ENCODE measurements at regions of chr17 and their contacts with region 1.

Region 1: DNA sequence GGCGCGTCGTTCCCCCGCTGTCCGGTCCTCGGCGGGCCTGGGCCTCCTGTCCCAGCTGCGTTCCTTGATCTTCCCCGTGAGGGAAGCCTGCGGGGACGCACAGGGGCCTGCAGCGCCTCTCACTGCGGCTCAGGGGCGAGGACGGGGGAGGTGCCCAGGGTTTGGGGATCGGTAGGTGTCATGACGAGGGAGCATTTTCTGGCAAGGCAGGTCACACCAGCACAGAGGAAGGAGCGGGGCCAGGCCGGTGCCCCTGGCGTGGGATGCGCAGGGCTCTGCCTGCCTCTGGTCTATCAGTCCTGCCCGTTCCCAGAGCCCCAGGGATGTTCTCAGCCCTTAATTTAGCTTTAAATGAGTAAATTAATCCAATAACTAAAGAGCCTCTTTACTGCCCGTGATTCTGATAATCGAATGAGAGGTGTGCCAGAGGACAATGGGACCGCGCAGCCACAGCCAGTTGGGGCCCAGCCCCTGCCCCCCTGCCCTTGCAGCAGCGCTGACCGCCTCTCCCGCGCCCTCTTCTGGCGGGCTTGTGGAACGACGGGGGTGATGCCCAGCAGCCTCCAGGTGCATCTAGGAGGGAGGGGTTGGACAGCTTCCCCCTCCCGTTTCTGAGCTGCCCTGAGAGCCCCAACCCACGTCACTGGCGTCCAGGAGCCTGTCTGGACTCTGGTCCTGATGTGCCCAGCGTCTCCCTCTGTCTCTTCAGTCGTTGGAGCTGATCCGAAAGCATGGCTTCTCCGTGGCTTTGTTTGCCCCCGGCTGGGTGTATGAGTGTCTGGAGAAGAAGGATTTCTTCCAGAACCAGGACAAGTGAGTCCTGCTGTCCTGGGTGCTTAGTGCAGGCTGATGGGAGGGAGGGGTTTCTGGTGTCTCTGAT is 7.9 kb downstream of the ENGASE start:
- DNase-seq: peak; percentile 57 to 89
- ATAC-seq: peak; percentile 44 to 83; a peak in 3 of 6 replicates
- H3K4me3 ChIP-seq: no peak overlapping the region
- H3K27ac ChIP-seq: no peak overlapping the region
- H3K4me1 ChIP-seq: no peaks in the 10 kb centered on the region
- CTCF ChIP-seq: peak; percentile 89
- EP300 ChIP-seq: no peak
- POLR2A ChIP-seq: no peak
- RAD21 ChIP-seq: peak; percentile 52 to 73

Region 2: GRCh38 chr17:78933959-78934568 is 148.5 kb before region 1 on chr17:
- CTCF ChIA-PET with region 1: no interaction called
- POLR2A ChIA-PET with region 1: no interaction called
- DNase-seq: peak; percentile 92 to 94
- ATAC-seq: peak; percentile 71 to 78
- H3K4me3 ChIP-seq: peak overlapping the region; percentile 26
- H3K27ac ChIP-seq: peak overlapping the region; percentile 91 to 97
- H3K4me1 ChIP-seq: peaks cover 56% of the 10 kb centered on the region
- CTCF ChIP-seq: no peak
- EP300 ChIP-seq: peak in 1 of 2 experiments; percentile 45; a peak in 1 of 5 replicates
- POLR2A ChIP-seq: peak; percentile 46
- RAD21 ChIP-seq: no peak

Region 3: GRCh38 chr17:78993241-78993956 is 89.2 kb before region 1 on chr17:
- CTCF ChIA-PET with region 1: interaction called, 11 read pairs
- POLR2A ChIA-PET with region 1: no interaction called
- DNase-seq: peak; percentile 69 to 78
- ATAC-seq: peak; percentile 64 to 87; a peak in 4 of 6 replicates
- H3K4me3 ChIP-seq: no peak overlapping the region
- H3K27ac ChIP-seq: no peak overlapping the region
- H3K4me1 ChIP-seq: no peaks in the 10 kb centered on the region; the same call in 2 of the 3 replicates
- CTCF ChIP-seq: peak; percentile 89
- EP300 ChIP-seq: no peak
- POLR2A ChIP-seq: no peak
- RAD21 ChIP-seq: peak; percentile 49 to 54

Region 4: DNA sequence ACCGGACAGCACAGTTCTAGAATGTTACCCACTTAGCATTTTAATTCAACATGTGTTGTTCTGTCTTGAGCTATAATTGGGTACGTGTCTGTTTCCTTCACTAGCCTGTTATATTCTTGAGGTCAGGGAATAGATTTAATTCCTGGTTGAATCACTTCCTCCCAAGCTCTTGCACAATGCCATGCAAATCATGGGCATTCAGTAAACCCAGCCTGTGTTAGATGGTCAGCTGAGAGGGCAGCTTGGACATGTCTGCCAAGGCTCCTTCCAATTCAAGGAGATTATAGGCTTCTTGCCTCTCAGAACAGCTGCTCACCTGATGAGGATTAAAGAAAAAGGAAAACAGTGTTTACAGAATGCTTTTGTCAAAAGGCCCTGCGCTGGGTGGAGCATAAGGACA is 46.0 kb before region 1 on chr17:
- CTCF ChIA-PET with region 1: interaction called, 26 read pairs
- POLR2A ChIA-PET with region 1: no interaction called
- DNase-seq: peak; percentile 75 to 87
- ATAC-seq: peak; percentile 70 to 72
- H3K4me3 ChIP-seq: no peak overlapping the region
- H3K27ac ChIP-seq: peak overlapping the region; percentile 80 to 89
- H3K4me1 ChIP-seq: peaks cover 48% of the 10 kb centered on the region
- CTCF ChIP-seq: no peak
- EP300 ChIP-seq: no peak
- POLR2A ChIP-seq: no peak
- RAD21 ChIP-seq: no peak

Region 5: GRCh38 chr17:79057737-79058385 is 24.7 kb before region 1 on chr17:
- CTCF ChIA-PET with region 1: interaction called, 289 read pairs
- POLR2A ChIA-PET with region 1: no interaction called
- DNase-seq: no peak
- ATAC-seq: peak; percentile 25 to 39; a peak in 1 of 6 replicates
- H3K4me3 ChIP-seq: no peak overlapping the region
- H3K27ac ChIP-seq: no peak overlapping the region
- H3K4me1 ChIP-seq: no peaks in the 10 kb centered on the region
- CTCF ChIP-seq: no peak
- EP300 ChIP-seq: no peak
- POLR2A ChIP-seq: no peak
- RAD21 ChIP-seq: no peak

Region 6: GRCh38 chr17:79095345-79096055 is 12.9 kb after region 1 on chr17:
- CTCF ChIA-PET with region 1: interaction called, 147 read pairs
- POLR2A ChIA-PET with region 1: no interaction called
- DNase-seq: no peak
- ATAC-seq: peak; percentile 6 to 20; a peak in 4 of 6 replicates
- H3K4me3 ChIP-seq: no peak overlapping the region
- H3K27ac ChIP-seq: no peak overlapping the region
- H3K4me1 ChIP-seq: 0 out of 3 replicates have a peak, but pooled peaks cover 6% of the 10 kb centered on the region
- CTCF ChIP-seq: no peak
- EP300 ChIP-seq: no peak
- POLR2A ChIP-seq: no peak
- RAD21 ChIP-seq: no peak

Region 7: DNA sequence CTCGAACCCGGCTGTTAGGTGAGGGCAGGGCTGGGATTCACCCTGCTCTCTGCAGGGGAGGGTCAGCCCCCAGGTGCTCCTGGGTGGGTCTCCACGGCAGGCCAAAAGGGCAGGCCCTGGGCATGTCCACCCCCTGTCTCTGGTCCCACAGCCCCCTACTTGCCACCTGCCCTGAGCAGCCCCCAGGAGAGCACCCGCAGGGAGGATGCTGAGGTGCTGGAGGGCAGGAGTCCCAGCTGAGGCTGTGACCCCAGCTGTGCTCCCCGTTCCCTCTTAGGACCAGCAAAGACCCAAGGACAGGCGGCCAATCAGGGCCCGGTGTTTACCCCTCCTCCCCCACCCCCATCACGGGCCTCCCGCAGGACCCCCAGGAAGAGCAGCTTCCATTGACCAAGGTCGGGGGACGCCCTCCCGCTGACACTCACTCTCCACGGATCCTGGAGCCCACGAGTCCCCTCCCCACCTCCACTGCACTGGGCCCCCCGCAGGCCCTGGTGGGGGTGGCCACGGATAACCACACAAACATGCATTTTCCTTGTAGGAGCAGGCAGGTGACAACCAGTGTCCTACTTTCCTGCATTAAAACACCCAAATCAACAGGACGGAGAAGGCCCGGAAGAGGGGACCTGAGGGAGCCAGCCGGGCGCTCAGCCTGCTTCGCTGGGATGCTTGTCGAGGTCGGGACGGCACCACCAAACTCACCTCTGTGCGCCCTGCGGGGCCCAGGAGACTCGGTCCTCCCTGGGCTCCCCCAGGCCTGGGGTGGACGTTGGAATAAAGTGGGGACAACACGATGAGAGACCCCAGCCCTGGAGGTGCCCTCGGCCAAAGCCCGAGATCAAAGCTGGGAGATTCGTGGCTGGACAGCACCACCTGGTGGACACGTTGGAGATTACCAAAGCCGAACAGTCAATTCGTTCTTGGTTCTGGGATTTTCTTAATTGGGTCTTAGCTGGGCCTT is 625.7 kb after region 1 on chr17:
- CTCF ChIA-PET with region 1: interaction called, 51 read pairs
- POLR2A ChIA-PET with region 1: no interaction called
- DNase-seq: peak; percentile 66 to 71
- ATAC-seq: peak; percentile 58 to 80
- H3K4me3 ChIP-seq: no peak overlapping the region
- H3K27ac ChIP-seq: peak overlapping the region; percentile 63 to 77; a peak in 5 of 6 replicates
- H3K4me1 ChIP-seq: peaks cover 17% of the 10 kb centered on the region
- CTCF ChIP-seq: peak; percentile 96
- EP300 ChIP-seq: no peak
- POLR2A ChIP-seq: no peak
- RAD21 ChIP-seq: peak; percentile 96 to 97